Panc1 (cell line): ENCODE measurements at regions of chr3 and their contacts with region 1.

Region 1: DNA sequence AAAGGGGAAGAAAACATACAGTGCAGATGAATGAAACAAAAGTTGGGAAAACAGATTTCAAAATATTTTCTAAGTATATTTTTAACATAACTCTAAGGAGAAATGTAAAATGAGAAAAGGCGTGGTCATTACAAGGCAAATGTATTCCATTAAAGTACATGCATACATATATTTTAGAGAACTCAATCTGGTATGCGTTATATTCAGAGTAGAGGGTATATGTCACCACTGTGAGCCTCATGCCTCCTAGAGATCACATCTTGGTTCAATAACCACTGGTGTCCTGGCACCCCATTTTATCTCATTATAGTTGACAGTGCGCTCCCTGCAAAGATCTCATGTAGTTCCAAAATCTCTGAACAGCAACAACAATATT is 77.5 kb downstream of the SMARCC1 start:
- DNase-seq: no peak
- ATAC-seq: no peak
- H3K4me3 ChIP-seq: no peak overlapping the region
- H3K27ac ChIP-seq: no peak overlapping the region
- H3K4me1 ChIP-seq: no peaks in the 10 kb centered on the region
- H3K27me3 ChIP-seq: no peaks in the 10 kb centered on the region
- CTCF ChIP-seq: no peak

Region 2: DNA sequence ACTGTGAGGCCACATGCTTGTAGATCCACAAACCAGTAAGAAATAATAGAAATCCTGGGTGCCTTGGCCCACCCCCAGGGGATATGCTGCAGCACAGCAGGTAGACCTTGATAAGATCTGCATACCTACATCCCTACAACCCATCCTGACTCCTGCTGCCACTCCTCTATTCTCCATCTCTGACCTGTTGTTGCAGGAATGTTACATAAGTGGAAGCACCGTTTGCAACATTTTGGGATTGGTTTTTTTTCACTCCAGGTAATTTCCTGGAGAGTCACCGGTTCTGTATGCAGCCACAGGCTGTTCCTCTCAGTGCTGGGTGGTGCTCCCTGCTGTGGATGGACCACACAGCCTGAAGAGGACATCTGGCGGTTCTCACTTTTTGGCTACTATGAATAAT is 109.4 kb before region 1 on chr3:
- CTCF ChIA-PET with region 1: no interaction called
- POLR2A ChIA-PET with region 1: no interaction called
- in situ Hi-C with region 1: no loop called
- intact Hi-C with region 1: no loop called
- DNase-seq: no peak
- ATAC-seq: no peak
- H3K4me3 ChIP-seq: no peak overlapping the region
- H3K27ac ChIP-seq: no peak overlapping the region
- H3K4me1 ChIP-seq: no peaks in the 10 kb centered on the region
- H3K27me3 ChIP-seq: no peaks in the 10 kb centered on the region
- CTCF ChIP-seq: no peak

Region 3: GRCh38 chr3:47716656-47717055 is 12.4 kb after region 1 on chr3:
- CTCF ChIA-PET with region 1: no interaction called
- POLR2A ChIA-PET with region 1: interaction called, 11 read pairs
- in situ Hi-C with region 1: no loop called
- intact Hi-C with region 1: no loop called
- DNase-seq: no peak
- ATAC-seq: no peak
- H3K4me3 ChIP-seq: no peak overlapping the region
- H3K27ac ChIP-seq: no peak overlapping the region
- H3K4me1 ChIP-seq: no peaks in the 10 kb centered on the region
- H3K27me3 ChIP-seq: no peaks in the 10 kb centered on the region
- CTCF ChIP-seq: no peak